ENCODE measurements at regions of chr13 and their contacts with region 1.

Region 1: GRCh38 chr13:30196025-30196424 is 111.3 kb downstream of the KATNAL1 start:
- DNase-seq: no peak
- H3K4me3 ChIP-seq: no peak overlapping the region
- H3K27ac ChIP-seq: no peak overlapping the region
- H3K4me1 ChIP-seq: no peaks in the 10 kb centered on the region
- H3K27me3 ChIP-seq: no peaks in the 10 kb centered on the region
- CTCF ChIP-seq: no peak
- POLR2A ChIP-seq: no peak

Region 2: DNA sequence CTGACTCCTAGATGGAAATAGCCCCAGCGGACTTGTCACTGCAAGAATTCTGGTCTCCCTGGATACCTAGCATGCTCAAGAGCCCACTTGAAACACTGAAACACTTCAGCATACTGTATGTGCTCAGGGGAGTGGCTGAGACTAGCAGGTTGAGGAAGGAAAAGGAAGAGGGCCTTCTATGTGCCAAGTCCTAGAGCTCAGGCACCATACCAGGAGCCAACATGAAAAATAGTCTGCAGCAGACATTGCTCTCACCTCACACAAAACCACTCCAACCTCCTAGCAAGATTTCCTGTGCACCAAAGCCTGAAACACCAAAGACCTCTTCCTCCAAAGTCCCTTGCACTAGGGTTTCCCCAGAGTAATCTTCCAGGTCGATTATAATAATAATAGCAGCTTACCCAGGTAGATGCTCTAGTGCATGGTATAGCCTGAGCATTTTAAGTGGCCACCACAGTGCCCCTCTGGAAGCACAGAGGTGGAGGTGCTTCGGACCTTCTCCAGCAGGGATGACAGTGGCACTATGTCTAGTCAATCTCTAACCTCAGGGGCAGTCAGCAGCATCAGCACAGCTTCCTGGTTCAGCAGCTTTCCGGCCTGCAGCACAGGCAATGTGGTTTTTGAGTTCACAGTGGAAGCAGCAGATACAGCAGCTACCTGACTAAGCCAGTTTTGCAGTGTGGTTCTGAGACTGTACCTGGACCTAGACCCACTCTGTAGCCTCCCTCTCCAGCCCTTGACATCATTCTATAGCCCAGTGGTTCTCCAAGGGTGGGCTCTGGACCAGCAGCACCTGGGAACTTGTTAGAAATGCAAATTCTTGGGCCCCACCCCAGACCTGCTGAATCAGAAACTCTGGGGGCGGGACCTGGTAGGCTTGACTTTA is 180.6 kb after region 1 on chr13:
- intact Hi-C with region 1: loop called (anchors 5 kb)
- DNase-seq: no peak
- H3K4me3 ChIP-seq: no peak overlapping the region
- H3K27ac ChIP-seq: no peak overlapping the region
- H3K4me1 ChIP-seq: no peaks in the 10 kb centered on the region
- H3K27me3 ChIP-seq: no peaks in the 10 kb centered on the region
- CTCF ChIP-seq: no peak
- POLR2A ChIP-seq: no peak